ENCODE measurements at regions of chr15 and their contacts with region 1.

Region 1: GRCh38 chr15:59492389-59493377 is 54.7 kb downstream of the FAM81A start:
- DNase-seq: peak; percentile 42 to 72 (median 61)
- H3K4me3 ChIP-seq: no peak overlapping the region
- H3K27ac ChIP-seq: no peak overlapping the region
- H3K4me1 ChIP-seq: no peaks in the 10 kb centered on the region
- H3K27me3 ChIP-seq: no peaks in the 10 kb centered on the region
- CTCF ChIP-seq: peak; percentile 67 to 80 (median 76)
- EP300 ChIP-seq: no peak
- POLR2A ChIP-seq: no peak

Region 2: GRCh38 chr15:58966698-58967097 is 526.0 kb before region 1 on chr15:
- intact Hi-C with region 1: loop called in 1 of 4 experiments (anchors 5 kb)
- DNase-seq: no peak
- H3K4me3 ChIP-seq: no peak overlapping the region
- H3K27ac ChIP-seq: no peak overlapping the region
- H3K4me1 ChIP-seq: no peaks in the 10 kb centered on the region
- H3K27me3 ChIP-seq: no peaks in the 10 kb centered on the region
- CTCF ChIP-seq: no peak
- EP300 ChIP-seq: no peak
- POLR2A ChIP-seq: no peak

Region 3: DNA sequence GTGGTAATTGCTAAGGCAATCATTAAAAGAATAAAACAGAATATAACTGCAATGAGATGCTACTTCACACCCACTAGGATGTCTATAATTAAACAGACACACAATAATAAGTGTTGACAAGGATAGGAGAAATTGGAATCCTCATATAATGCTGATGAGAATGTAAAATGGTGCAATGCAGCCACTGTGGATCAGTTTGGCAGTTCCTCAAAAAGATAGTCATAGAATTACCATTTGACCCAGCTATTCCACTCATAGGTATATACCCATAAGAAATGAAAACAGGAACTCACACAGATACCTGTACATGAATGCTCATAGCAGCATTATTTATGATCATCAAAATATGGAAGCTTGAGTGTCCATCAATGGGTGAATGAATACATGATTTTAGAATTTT is 514.8 kb before region 1 on chr15:
- intact Hi-C with region 1: loop called in 2 of 4 experiments (anchors 5 kb)
- DNase-seq: no peak
- H3K4me3 ChIP-seq: no peak overlapping the region
- H3K27ac ChIP-seq: no peak overlapping the region
- H3K4me1 ChIP-seq: no peaks in the 10 kb centered on the region
- H3K27me3 ChIP-seq: no peaks in the 10 kb centered on the region
- CTCF ChIP-seq: no peak
- EP300 ChIP-seq: no peak
- POLR2A ChIP-seq: no peak

Region 4: DNA sequence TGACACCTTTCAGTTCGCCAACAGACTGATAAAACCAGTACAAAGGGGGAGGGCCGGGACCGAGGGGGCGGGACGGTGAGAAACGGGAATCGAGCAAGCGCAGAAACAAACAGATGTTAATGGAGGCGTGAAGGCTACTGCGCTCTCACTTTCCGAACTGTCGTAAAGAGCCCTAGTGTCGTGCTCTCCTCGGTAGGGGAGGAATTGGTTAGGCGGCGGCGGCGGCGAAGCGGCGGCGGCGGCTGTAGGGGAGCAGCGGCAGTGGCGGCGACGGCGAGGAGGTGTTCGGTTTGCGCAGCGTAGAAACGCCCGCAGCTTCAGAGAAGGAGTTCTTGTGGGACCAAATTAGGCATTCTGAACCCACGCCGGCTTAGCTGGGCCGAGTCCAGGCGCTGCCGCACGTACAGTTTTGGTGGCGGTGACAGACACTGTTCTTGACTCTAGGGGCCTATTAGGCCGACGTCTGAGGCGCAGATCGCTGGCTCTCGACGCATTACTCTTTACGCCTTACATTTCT is 505.1 kb before region 1 on chr15 and contains the start of gene RNF111:
- intact Hi-C with region 1: loop called in 1 of 4 experiments (anchors 5 kb)
- DNase-seq: peak; percentile 85 to 90 (median 87)
- H3K4me3 ChIP-seq: peak within 1 kb of the TSS; percentile 77
- H3K27ac ChIP-seq: peak within 1 kb of the TSS; percentile 77 to 95
- H3K4me1 ChIP-seq: no peaks in the 10 kb centered on the region
- H3K27me3 ChIP-seq: no peaks in the 10 kb centered on the region
- CTCF ChIP-seq: no peak
- EP300 ChIP-seq: no peak
- POLR2A ChIP-seq: peak; percentile 73
- total RNA-seq, gene RNF111: 12.8 to 47.5 (median 29.3) TPM

Region 5: GRCh38 chr15:59668556-59668955 is 175.9 kb after region 1 on chr15:
- intact Hi-C with region 1: no loop called
- DNase-seq: no peak
- H3K4me3 ChIP-seq: no peak overlapping the region
- H3K27ac ChIP-seq: no peak overlapping the region
- H3K4me1 ChIP-seq: no peaks in the 10 kb centered on the region
- H3K27me3 ChIP-seq: no peaks in the 10 kb centered on the region
- CTCF ChIP-seq: no peak
- EP300 ChIP-seq: no peak
- POLR2A ChIP-seq: no peak

Measured in ovary (tissue), 10 donors.